Calu3 (cell line): ENCODE measurements at regions of chr4 and their contacts with region 1.

Region 1: GRCh38 chr4:118981839-118982381 is 93.3 kb downstream of the SYNPO2 start:
- DNase-seq: peak; percentile 55
- H3K4me3 Mint-ChIP-seq: no peak overlapping the region
- H3K27ac Mint-ChIP-seq: no peak overlapping the region
- H3K4me1 Mint-ChIP-seq: no peaks in the 10 kb centered on the region
- H3K27me3 Mint-ChIP-seq: no peaks in the 10 kb centered on the region
- CTCF ChIP-seq: peak; percentile 20

Region 2: GRCh38 chr4:118798658-118799057 is 183.3 kb before region 1 on chr4:
- CTCF ChIA-PET with region 1: no interaction called
- intact Hi-C with region 1: no loop called
- DNase-seq: no peak
- H3K4me3 Mint-ChIP-seq: no peak overlapping the region
- H3K27ac Mint-ChIP-seq: no peak overlapping the region
- H3K4me1 Mint-ChIP-seq: no peaks in the 10 kb centered on the region
- H3K27me3 Mint-ChIP-seq: no peaks in the 10 kb centered on the region
- CTCF ChIP-seq: no peak

Region 3: DNA sequence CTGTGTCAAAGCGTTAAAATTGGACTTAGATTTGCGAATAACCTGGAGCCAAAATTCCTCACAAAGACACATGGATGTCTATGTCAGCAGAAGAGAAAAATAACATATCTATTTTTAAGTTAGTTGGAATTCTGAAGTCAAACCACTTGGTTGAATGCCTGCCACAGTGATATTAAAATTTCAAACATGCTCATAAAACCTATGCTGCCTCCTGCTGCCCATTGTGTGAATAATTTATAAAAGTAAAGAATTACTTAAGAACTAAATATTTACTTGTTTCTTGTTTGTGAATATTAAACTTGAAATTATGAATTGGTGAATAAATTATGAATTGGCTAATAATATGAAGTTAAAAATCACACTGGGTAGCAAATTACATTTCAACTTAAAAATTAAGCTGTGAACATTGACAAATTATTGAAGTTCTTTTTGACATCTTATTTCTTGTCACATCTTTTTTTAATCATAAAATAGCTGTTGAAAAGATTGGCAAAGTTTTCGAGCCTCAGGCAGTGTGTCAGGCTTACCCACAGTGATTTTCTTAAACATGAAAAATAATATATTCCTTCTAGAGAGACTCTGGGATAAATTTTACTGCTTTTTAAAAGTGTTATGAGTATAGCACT is 304.6 kb after region 1 on chr4:
- CTCF ChIA-PET with region 1: no interaction called
- intact Hi-C with region 1: loop called (anchors 1 kb)
- DNase-seq: peak; percentile 10
- H3K4me3 Mint-ChIP-seq: no peak overlapping the region
- H3K27ac Mint-ChIP-seq: no peak overlapping the region
- H3K4me1 Mint-ChIP-seq: peaks cover 23% of the 10 kb centered on the region
- H3K27me3 Mint-ChIP-seq: no peaks in the 10 kb centered on the region
- CTCF ChIP-seq: no peak

Region 4: DNA sequence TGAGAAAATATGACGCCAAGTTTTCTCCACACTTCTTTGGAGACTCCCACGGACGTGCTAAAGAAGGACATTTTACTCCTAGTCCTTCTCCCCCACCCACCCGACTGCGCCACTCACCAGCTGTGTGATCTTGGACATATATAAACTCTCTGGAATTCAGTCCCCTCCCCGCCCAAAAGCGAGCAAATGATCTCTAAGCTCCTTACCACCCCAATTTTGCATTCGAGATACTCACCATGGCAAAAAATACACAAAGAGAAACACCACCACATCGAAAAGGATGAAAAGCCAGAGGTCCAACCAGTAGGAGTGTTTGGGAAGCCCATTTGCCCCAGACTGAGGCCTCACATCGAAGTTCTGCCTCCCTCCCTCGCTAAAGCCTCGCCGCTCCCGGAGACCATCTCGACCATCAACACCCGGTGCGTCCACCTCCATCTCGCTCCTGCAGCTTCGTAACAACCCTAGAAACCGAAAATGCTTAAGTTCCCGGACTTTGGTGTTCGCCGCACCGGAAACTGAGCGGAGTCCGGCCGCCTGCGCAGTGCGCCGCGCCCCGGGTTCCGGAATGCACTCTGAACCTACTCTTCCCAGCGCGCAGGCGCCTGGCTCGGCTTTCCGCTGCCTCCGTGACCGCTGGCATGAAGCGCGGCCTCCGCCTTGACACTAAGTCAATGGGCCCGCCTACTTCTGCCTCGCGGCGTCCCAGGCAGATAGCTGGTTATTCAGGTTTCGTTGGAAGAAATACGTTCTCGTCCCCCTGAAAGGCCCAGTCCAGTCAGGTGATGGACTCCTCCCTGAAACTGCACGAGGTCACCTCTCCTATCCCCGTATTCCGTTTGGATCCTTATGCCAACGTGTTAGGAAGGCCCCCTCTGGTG is 318.4 kb after region 1 on chr4:
- CTCF ChIA-PET with region 1: no interaction called
- intact Hi-C with region 1: loop called (anchors 5 kb)
- DNase-seq: peak; percentile 90
- H3K4me3 Mint-ChIP-seq: peak overlapping the region; percentile 100
- H3K27ac Mint-ChIP-seq: peak overlapping the region; percentile 92
- H3K4me1 Mint-ChIP-seq: peaks cover 25% of the 10 kb centered on the region
- H3K27me3 Mint-ChIP-seq: no peaks in the 10 kb centered on the region
- CTCF ChIP-seq: no peak

Region 5: DNA sequence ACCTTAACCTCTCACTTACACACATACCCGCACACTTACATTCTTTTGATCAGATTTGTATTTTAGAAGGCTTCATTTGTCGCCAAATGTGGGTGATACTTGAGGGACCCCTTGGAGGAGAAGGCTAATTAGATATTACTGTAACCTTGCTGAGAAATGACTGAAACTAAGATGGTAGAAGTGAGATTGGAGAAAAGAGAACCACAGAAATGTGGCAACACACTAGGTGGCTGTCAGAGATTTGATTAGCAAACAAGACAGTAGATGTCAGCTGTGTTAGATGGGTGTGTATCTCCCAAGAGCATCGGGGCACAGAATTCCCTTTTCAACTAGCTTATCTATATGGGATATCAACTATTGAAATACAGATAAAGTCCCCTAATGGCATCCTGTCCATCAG is 489.3 kb after region 1 on chr4:
- CTCF ChIA-PET with region 1: no interaction called
- intact Hi-C with region 1: no loop called
- DNase-seq: no peak
- H3K4me3 Mint-ChIP-seq: no peak overlapping the region
- H3K27ac Mint-ChIP-seq: no peak overlapping the region
- H3K4me1 Mint-ChIP-seq: no peaks in the 10 kb centered on the region
- H3K27me3 Mint-ChIP-seq: no peaks in the 10 kb centered on the region
- CTCF ChIP-seq: no peak

Region 6: DNA sequence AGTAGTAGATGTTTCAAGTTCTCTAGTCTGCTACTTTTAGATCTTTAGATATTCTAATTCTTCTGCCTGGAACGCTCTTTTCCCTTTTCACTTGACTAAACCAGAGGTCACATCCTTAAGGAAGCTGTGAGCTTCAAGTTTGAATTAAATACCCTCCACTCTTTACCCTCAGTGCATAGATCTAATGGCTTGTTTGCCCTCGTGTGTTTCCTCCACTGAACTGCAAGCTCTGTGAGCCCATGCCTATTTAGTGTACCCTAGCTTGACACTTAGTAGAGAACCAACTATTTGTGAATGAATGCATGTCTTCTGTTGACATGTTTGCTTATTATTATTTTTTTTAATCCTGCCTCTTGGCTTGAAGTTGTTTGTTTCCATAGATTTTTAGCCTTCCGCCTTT is 508.4 kb after region 1 on chr4:
- CTCF ChIA-PET with region 1: no interaction called
- intact Hi-C with region 1: loop called (anchors 2 kb)
- DNase-seq: no peak
- H3K4me3 Mint-ChIP-seq: no peak overlapping the region
- H3K27ac Mint-ChIP-seq: no peak overlapping the region
- H3K4me1 Mint-ChIP-seq: no peaks in the 10 kb centered on the region
- H3K27me3 Mint-ChIP-seq: no peaks in the 10 kb centered on the region
- CTCF ChIP-seq: no peak